A673 (cell line): ENCODE measurements at regions of chr10 and their contacts with region 1.

Region 1: GRCh38 chr10:11510736-11511135 is 100.7 kb downstream of the USP6NL start:
- DNase-seq: peak; percentile 42
- H3K4me3 ChIP-seq: no peak overlapping the region
- H3K27ac ChIP-seq: peak overlapping the region; percentile 29
- H3K4me1 ChIP-seq: peaks cover 55% of the 10 kb centered on the region
- H3K27me3 ChIP-seq: no peaks in the 10 kb centered on the region
- CTCF ChIP-seq: no peak

Region 2: GRCh38 chr10:11742005-11742778 is 231.5 kb after region 1 on chr10 and contains the start of gene ECHDC3:
- CTCF ChIA-PET with region 1: no interaction called
- POLR2A ChIA-PET with region 1: no interaction called
- intact Hi-C with region 1: loop called (anchors 5 kb)
- DNase-seq: peak; percentile 68
- H3K4me3 ChIP-seq: peak within 1 kb of the TSS; percentile 66
- H3K27ac ChIP-seq: peak within 1 kb of the TSS; percentile 72
- H3K4me1 ChIP-seq: peaks cover 5% of the 10 kb centered on the region
- H3K27me3 ChIP-seq: no peaks in the 10 kb centered on the region
- CTCF ChIP-seq: no peak
- total RNA-seq, gene ECHDC3: 8.9 and 13.9 TPM in 2 replicates